ENCODE measurements at regions of chr16 and their contacts with region 1.

Region 1: GRCh38 chr16:87076950-87077749 is 240.0 kb downstream of the C16orf95 start:
- DNase-seq: peak; percentile 60
- H3K4me3 ChIP-seq: no peak overlapping the region
- H3K27ac ChIP-seq: no peak overlapping the region
- H3K4me1 ChIP-seq: peaks cover 5% of the 10 kb centered on the region
- H3K27me3 ChIP-seq: no peaks in the 10 kb centered on the region
- CTCF ChIP-seq: peak; percentile 89 to 90

Region 2: DNA sequence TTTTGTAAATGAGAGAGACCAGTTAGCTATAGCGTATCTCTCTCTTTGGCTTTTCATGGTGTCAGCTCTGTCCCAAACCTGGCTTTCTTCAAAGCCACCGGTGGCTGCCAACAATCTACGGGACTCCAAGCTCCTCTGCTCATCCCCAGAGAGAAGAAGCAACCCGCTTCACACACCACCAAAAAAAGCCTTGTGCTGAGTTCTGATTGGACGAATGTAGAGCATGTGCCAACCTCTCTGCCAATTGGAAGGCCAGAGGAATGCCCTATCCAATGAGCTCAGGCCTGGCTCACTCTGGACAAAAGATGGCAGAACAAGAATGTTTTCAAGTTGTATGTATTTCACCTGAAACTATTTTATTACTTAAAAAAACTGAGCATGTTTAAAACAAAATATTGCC is 37.7 kb after region 1 on chr16:
- CTCF ChIA-PET with region 1: no interaction called
- dilution Hi-C with region 1: no loop called
- in situ Hi-C with region 1: no loop called
- intact Hi-C with region 1: no loop called
- DNase-seq: no peak
- H3K4me3 ChIP-seq: no peak overlapping the region
- H3K27ac ChIP-seq: no peak overlapping the region
- H3K4me1 ChIP-seq: no peaks in the 10 kb centered on the region
- H3K27me3 ChIP-seq: no peaks in the 10 kb centered on the region
- CTCF ChIP-seq: no peak

Region 3: DNA sequence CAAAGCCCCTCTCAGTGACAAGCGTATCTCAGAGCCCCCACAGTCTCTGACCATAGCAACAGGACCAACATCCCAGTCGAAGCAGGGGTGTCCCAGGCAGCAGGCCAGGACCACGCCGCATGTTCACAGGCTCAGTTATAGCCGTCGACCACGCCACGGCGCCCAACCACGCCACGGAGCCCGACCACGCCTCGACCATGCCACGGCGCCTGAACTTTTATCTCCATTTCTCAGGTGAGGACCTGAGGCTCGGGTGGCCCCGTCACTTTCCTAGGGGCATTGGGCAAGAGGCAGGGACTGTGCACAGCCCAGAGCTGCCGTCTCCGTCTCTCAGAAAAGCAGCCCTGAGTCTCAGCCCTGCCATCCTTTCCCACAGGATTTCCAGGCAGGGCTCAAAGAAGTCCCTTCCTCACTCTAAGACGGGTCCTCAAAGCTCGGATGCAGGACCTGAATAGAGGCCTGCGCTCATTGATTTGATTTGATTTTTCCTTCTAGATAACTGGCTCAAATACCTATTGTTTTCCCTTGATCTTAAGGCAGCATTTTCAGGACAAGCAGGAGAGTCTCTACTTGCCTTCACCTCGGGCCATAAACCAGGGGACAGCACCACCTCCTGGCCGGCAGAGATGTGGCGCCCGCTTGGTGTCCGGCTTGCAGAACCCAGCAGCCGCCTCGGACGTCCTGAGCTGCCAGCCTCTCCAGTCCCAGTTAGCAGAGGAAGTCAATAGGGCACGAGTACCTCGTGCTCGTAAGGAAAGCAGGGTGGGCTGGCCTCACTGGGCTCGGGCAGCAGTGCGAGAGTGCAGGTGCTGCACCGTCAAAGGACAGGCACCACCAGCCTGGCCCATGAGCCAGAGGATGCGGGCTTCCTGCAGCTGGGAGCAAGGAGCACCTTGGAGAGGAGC is 201.3 kb after region 1 on chr16:
- CTCF ChIA-PET with region 1: no interaction called
- dilution Hi-C with region 1: no loop called
- in situ Hi-C with region 1: loop called in 1 of 2 experiments (anchors 25 kb)
- intact Hi-C with region 1: loop called (anchors 5 kb)
- DNase-seq: peak; percentile 58
- H3K4me3 ChIP-seq: no peak overlapping the region
- H3K27ac ChIP-seq: no peak overlapping the region
- H3K4me1 ChIP-seq: no peaks in the 10 kb centered on the region
- H3K27me3 ChIP-seq: no peaks in the 10 kb centered on the region
- CTCF ChIP-seq: peak; percentile 85 to 93

Region 4: DNA sequence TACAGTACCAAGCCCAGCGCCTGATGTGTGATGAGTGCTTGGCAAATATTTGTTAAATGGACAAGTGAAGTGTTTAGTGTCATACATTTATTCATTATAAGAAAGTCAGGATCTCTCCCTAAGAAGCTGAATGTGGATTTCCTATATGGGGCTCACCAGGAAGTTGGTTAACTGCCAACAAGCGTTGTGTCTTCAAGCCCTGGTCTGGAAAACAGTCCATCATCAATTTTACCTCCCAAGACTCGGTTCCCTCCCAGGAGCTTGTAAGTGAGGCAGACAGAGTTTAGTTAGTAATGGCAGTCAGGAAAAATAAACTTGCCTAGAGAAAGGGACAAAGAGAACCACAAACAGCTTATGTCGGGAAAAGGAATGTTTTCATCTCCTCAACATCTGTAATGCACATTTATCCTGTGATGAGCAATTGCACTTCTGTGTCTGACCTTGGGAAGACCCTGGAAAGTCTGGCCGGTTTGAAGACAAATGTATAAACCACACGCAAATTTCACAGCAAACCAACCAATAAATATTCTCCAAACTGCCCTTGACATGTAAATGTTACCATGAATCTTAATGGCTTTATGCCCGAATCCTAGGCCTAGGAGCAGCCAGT is 211.7 kb after region 1 on chr16:
- CTCF ChIA-PET with region 1: no interaction called
- dilution Hi-C with region 1: no loop called
- in situ Hi-C with region 1: loop called in 1 of 2 experiments (anchors 25 kb)
- intact Hi-C with region 1: loop called (anchors 5 kb)
- DNase-seq: no peak
- H3K4me3 ChIP-seq: no peak overlapping the region
- H3K27ac ChIP-seq: no peak overlapping the region
- H3K4me1 ChIP-seq: no peaks in the 10 kb centered on the region
- H3K27me3 ChIP-seq: no peaks in the 10 kb centered on the region
- CTCF ChIP-seq: no peak

Measured in mammary epithelial cell (primary cell).